ENCODE measurements at regions of chr17 and their contacts with region 1.

Region 1: GRCh38 chr17:48457080-48457836 is 27.2 kb upstream of the SKAP1 start:
- DNase-seq: peak; percentile 80 to 90
- H3K4me3 ChIP-seq: peak overlapping the region; percentile 17
- H3K4me3 Mint-ChIP-seq: peak overlapping the region; percentile 69
- H3K27ac Mint-ChIP-seq: peak overlapping the region; percentile 31
- H3K4me1 ChIP-seq: peaks cover 18% of the 10 kb centered on the region
- H3K4me1 Mint-ChIP-seq: peaks cover 19% of the 10 kb centered on the region
- H3K27me3 ChIP-seq: no peaks in the 10 kb centered on the region; the same call in 1 of the 2 replicates
- H3K27me3 Mint-ChIP-seq: peaks cover 16% of the 10 kb centered on the region
- CTCF ChIP-seq: peak; percentile 100

Region 2: GRCh38 chr17:48351831-48352332 is 105.4 kb before region 1 on chr17:
- CTCF ChIA-PET with region 1: interaction called, 15 read pairs
- POLR2A ChIA-PET with region 1: no interaction called
- intact Hi-C with region 1: loop called (anchors 1 kb)
- DNase-seq: peak in 1 of 2 experiments; percentile 56
- H3K4me3 ChIP-seq: no peak overlapping the region
- H3K4me3 Mint-ChIP-seq: no peak overlapping the region
- H3K27ac Mint-ChIP-seq: no peak overlapping the region
- H3K4me1 ChIP-seq: no peaks in the 10 kb centered on the region
- H3K4me1 Mint-ChIP-seq: no peaks in the 10 kb centered on the region
- H3K27me3 ChIP-seq: no peaks in the 10 kb centered on the region; the same call in 1 of the 2 replicates
- H3K27me3 Mint-ChIP-seq: peaks cover 8% of the 10 kb centered on the region
- CTCF ChIP-seq: peak; percentile 90

Region 3: GRCh38 chr17:48374650-48375230 is 82.5 kb before region 1 on chr17:
- CTCF ChIA-PET with region 1: interaction called, 3 read pairs
- POLR2A ChIA-PET with region 1: no interaction called
- intact Hi-C with region 1: loop called (anchors 5 kb)
- DNase-seq: peak; percentile 81 to 88
- H3K4me3 ChIP-seq: no peak overlapping the region
- H3K4me3 Mint-ChIP-seq: no peak overlapping the region
- H3K27ac Mint-ChIP-seq: no peak overlapping the region
- H3K4me1 ChIP-seq: no peaks in the 10 kb centered on the region
- H3K4me1 Mint-ChIP-seq: no peaks in the 10 kb centered on the region
- H3K27me3 ChIP-seq: no peaks in the 10 kb centered on the region; the same call in 1 of the 2 replicates
- H3K27me3 Mint-ChIP-seq: peaks cover 2% of the 10 kb centered on the region
- CTCF ChIP-seq: peak; percentile 98

Region 4: DNA sequence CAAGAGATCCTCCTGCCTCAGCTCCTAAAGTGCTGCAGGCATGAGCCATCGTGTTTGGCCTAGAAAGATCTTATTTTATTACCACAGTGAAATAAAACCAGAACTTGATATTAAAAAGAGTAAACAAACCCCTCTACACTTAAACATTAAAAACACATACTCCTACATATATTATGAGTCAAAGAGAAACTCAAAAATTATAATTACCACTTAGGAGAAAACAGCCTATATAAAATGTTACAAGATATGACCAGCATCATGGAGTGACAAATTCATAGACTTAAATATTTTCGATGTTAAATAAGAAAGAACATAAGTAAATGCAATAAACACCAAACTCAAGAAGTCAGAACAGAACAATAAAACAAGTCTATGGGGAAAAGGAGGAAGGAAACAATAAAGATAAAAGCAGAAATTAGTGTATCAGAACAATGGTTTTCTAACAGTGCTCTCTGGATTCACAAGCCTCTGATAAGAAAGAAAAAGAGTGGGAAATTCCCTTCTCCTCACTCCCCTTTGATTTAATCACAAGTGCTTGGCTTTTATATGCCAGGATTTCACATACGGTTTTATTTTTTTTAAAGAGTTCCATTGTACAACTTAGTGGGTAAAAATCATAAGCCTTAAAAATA is 50.2 kb before region 1 on chr17:
- CTCF ChIA-PET with region 1: interaction called, 5 read pairs
- POLR2A ChIA-PET with region 1: interaction called, 4 read pairs
- intact Hi-C with region 1: loop called (anchors 5 kb)
- DNase-seq: no peak
- H3K4me3 ChIP-seq: no peak overlapping the region
- H3K4me3 Mint-ChIP-seq: no peak overlapping the region
- H3K27ac Mint-ChIP-seq: no peak overlapping the region
- H3K4me1 ChIP-seq: no peaks in the 10 kb centered on the region
- H3K4me1 Mint-ChIP-seq: peaks cover 6% of the 10 kb centered on the region
- H3K27me3 ChIP-seq: no peaks in the 10 kb centered on the region
- H3K27me3 Mint-ChIP-seq: peaks cover 21% of the 10 kb centered on the region
- CTCF ChIP-seq: no peak

Region 5: DNA sequence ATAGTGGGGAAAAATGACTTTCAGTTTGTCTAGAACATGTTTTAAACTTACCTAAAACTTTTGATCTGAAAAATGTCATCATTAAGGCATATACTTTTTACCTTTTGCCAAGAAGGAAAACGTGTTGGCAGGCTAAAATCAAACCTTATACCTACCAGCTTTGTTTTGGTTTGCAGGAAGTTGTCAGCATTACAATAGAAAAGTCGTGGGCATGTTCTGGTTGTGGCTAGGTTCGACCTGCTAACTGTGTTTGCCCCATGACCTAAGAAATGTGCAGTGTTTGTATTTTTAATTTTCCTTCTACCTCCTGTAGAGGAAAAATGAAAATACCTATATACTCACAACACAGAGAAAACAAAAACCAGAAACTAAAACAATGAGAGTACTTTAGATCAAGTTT is 40.3 kb before region 1 on chr17:
- CTCF ChIA-PET with region 1: no interaction called
- POLR2A ChIA-PET with region 1: no interaction called
- intact Hi-C with region 1: loop called (anchors 1 kb)
- DNase-seq: no peak
- H3K4me3 ChIP-seq: no peak overlapping the region
- H3K4me3 Mint-ChIP-seq: no peak overlapping the region
- H3K27ac Mint-ChIP-seq: no peak overlapping the region
- H3K4me1 ChIP-seq: 0 out of 2 replicates have a peak, but pooled peaks cover 4% of the 10 kb centered on the region
- H3K4me1 Mint-ChIP-seq: no peaks in the 10 kb centered on the region
- H3K27me3 ChIP-seq: peaks cover 1% of the 10 kb centered on the region; the same call in 1 of the 2 replicates
- H3K27me3 Mint-ChIP-seq: peaks cover 29% of the 10 kb centered on the region
- CTCF ChIP-seq: no peak

Region 6: DNA sequence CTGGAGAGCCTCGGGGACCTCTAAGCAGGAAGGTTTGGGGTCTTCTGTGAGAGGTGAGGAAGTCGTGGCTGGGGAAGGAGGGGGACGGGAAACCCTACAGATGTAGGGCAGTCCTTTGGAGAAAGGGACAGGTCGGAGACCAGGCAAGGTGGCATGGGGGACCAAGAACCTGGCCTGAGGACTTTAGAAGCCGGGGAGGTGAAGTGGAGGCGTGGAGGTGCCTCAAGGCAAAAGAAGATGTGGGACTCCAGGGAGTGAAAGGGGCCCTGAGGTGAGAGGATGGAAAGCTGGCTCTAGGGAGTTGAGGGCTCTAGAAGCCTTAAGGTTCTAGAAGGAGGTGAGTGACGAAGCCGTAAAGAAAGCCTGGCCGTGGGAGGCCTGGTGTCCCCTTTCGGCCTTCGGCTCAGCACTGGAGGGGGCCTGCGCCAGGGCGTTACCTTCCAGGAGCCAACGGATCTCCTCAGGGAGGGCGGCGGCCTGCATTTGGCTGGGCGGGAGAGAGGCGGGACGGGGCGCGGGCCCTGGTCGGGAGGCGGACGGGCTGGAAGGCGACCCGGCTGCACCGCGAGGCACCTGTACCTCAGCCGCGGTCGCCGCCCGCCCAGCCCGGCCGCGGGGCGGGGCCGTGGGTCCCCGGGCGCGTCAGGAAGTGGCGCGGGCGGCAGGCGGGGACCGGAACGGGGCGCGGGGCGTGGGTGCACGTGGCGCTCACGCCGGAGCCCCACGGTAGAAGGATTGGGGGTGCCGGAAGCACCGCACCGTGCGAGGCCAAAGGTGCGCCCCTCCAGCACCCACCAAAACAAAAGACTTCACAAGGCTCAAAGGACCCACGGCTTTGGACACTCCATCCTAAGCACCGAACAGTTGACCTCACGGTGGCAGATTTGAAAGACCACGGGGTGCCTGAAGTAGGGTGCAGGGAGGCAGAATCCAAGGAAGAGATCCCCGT is 27.3 kb before region 1 on chr17 and contains the start of gene SKAP1:
- CTCF ChIA-PET with region 1: interaction called, 3 read pairs
- POLR2A ChIA-PET with region 1: no interaction called
- intact Hi-C with region 1: loop called (anchors 2 kb)
- DNase-seq: peak; percentile 58
- H3K4me3 ChIP-seq: peak within 1 kb of the TSS; percentile 29
- H3K4me3 Mint-ChIP-seq: peak within 1 kb of the TSS; percentile 69
- H3K27ac Mint-ChIP-seq: peak within 1 kb of the TSS; percentile 16
- H3K4me1 ChIP-seq: peaks cover 26% of the 10 kb centered on the region
- H3K4me1 Mint-ChIP-seq: peaks cover 38% of the 10 kb centered on the region
- H3K27me3 ChIP-seq: peaks cover 3% of the 10 kb centered on the region; the same call in 1 of the 2 replicates
- H3K27me3 Mint-ChIP-seq: peaks cover 18% of the 10 kb centered on the region
- CTCF ChIP-seq: no peak
- total RNA-seq, gene SKAP1: 0.70 and 1.5 TPM in 2 replicates

Region 7: GRCh38 chr17:48492401-48493298 is 35.4 kb after region 1 on chr17:
- CTCF ChIA-PET with region 1: no interaction called
- POLR2A ChIA-PET with region 1: no interaction called
- intact Hi-C with region 1: loop called (anchors 2 kb)
- DNase-seq: peak; percentile 80 to 91
- H3K4me3 ChIP-seq: peak overlapping the region; percentile 15
- H3K4me3 Mint-ChIP-seq: peak overlapping the region; percentile 52
- H3K27ac Mint-ChIP-seq: no peak overlapping the region
- H3K4me1 ChIP-seq: peaks cover 14% of the 10 kb centered on the region
- H3K4me1 Mint-ChIP-seq: peaks cover 9% of the 10 kb centered on the region
- H3K27me3 ChIP-seq: peaks cover 5% of the 10 kb centered on the region; the same call in 1 of the 2 replicates
- H3K27me3 Mint-ChIP-seq: peaks cover 8% of the 10 kb centered on the region
- CTCF ChIP-seq: peak; percentile 99